ENCODE measurements at regions of chr7 and their contacts with region 1.

Region 1: DNA sequence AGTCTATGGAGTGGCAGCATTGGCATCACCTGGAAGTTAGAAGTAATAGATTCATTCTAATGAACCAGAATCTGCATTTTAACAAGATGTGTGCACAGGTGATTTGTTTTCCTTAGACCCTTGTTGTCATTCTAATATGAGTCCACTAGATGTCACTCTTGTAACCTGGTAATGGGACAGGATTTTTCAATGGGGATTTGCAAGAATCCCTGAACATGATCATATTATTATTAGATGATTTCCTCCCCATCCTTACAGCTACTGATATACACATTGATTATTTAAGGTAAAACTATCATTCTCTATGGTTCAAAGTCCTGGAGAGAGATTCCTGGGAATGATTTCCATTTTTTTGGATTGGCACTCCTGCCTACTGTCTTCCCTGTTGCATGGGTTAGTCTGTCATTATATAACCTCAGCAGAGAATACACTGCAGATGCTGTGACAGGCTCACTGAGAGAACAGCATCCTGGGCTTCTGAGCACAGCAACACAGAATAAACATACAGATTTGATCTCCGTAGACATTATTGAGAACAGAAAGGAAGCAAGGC is 194.9 kb downstream of the SUGCT start:
- DNase-seq: peak; percentile 49
- H3K4me3 ChIP-seq: no peak overlapping the region
- H3K27ac ChIP-seq: no peak overlapping the region
- H3K4me1 ChIP-seq: no peaks in the 10 kb centered on the region
- H3K27me3 ChIP-seq: no peaks in the 10 kb centered on the region
- CTCF ChIP-seq: peak; percentile 57 to 68

Region 2: GRCh38 chr7:40232242-40232893 is 97.3 kb before region 1 on chr7:
- CTCF ChIA-PET with region 1: no interaction called
- dilution Hi-C with region 1: no loop called
- in situ Hi-C with region 1: no loop called
- intact Hi-C with region 1: loop called (anchors 1 kb)
- DNase-seq: peak; percentile 55
- H3K4me3 ChIP-seq: no peak overlapping the region
- H3K27ac ChIP-seq: no peak overlapping the region
- H3K4me1 ChIP-seq: no peaks in the 10 kb centered on the region
- H3K27me3 ChIP-seq: no peaks in the 10 kb centered on the region
- CTCF ChIP-seq: peak; percentile 63 to 74

Region 3: DNA sequence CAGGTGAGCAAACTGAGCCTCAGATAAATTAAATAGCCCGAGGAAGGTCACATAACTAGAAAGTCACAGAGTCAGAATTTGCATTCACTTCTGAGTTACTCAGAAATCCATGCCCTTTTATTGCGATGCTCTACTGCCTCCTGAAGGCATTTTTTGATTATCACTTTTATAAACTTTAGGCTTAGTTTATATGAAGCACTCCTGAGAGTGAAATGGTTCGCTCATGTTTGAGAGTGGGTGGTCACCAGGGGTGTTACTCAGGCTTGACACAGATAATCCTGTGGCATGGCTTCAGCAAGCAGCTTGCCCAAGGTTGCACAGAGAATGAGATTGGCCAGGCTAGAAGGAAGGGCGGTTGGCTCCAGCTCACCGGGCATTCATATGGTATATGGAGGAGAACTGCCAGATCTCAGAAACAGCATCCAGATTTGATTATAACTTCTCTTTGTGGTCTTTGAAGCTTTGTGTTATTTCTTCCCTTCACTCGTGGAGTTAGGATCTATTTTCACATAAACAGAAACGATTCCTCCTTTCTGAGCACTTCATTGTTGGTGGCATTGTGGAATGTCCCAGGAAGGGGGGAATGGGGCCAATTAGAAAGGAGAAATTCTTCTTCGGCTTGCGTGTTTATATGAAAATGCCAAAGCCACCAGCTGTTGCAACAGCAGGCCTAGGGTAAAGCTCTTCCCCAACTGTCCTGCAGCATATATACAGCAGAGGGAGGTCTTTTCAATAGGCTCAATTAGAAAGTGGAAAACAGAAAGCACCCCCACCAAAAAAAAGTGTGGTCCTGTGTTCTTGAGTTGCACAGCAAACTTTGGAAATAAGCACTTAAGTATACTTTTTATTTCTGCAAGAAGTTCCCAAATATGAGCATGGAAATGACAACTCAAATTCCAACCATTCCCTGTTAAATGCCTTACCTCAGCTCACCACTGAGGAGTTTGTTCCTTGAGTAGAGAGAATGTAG is 433.9 kb after region 1 on chr7:
- CTCF ChIA-PET with region 1: no interaction called
- dilution Hi-C with region 1: no loop called
- in situ Hi-C with region 1: loop called (anchors 10 to 25 kb)
- intact Hi-C with region 1: loop called (anchors 1 kb)
- DNase-seq: no peak
- H3K4me3 ChIP-seq: no peak overlapping the region
- H3K27ac ChIP-seq: no peak overlapping the region
- H3K4me1 ChIP-seq: peaks cover 7% of the 10 kb centered on the region
- H3K27me3 ChIP-seq: no peaks in the 10 kb centered on the region
- CTCF ChIP-seq: peak; percentile 30 to 51

Region 4: GRCh38 chr7:41045556-41046123 is 716.0 kb after region 1 on chr7:
- CTCF ChIA-PET with region 1: no interaction called
- dilution Hi-C with region 1: no loop called
- in situ Hi-C with region 1: no loop called
- intact Hi-C with region 1: loop called (anchors 1 kb)
- DNase-seq: peak; percentile 70
- H3K4me3 ChIP-seq: no peak overlapping the region
- H3K27ac ChIP-seq: no peak overlapping the region
- H3K4me1 ChIP-seq: peaks cover 16% of the 10 kb centered on the region
- H3K27me3 ChIP-seq: no peaks in the 10 kb centered on the region
- CTCF ChIP-seq: peak; percentile 71 to 88

Region 5: GRCh38 chr7:41731492-41732435 is 1402.1 kb after region 1 on chr7:
- CTCF ChIA-PET with region 1: no interaction called
- dilution Hi-C with region 1: no loop called
- in situ Hi-C with region 1: no loop called
- intact Hi-C with region 1: loop called (anchors 2 kb)
- DNase-seq: no peak
- H3K4me3 ChIP-seq: no peak overlapping the region
- H3K27ac ChIP-seq: no peak overlapping the region
- H3K4me1 ChIP-seq: no peaks in the 10 kb centered on the region
- H3K27me3 ChIP-seq: no peaks in the 10 kb centered on the region
- CTCF ChIP-seq: peak; percentile 32 to 49